MCF 10A (cell line): ENCODE measurements at regions of chr22 and their contacts with region 1.

Region 1: GRCh38 chr22:28772633-28773460 is at the start of gene CCDC117:
- DNase-seq: peak; percentile 93
- H3K4me3 Mint-ChIP-seq: peak within 1 kb of the TSS; percentile 88
- H3K27ac Mint-ChIP-seq: peak within 1 kb of the TSS; percentile 87
- H3K4me1 Mint-ChIP-seq: peaks cover 10% of the 10 kb centered on the region
- H3K27me3 Mint-ChIP-seq: no peaks in the 10 kb centered on the region
- CTCF ChIP-seq: no peak
- total RNA-seq, gene CCDC117: 12.1 and 14.6 TPM in 2 replicates

Region 2: DNA sequence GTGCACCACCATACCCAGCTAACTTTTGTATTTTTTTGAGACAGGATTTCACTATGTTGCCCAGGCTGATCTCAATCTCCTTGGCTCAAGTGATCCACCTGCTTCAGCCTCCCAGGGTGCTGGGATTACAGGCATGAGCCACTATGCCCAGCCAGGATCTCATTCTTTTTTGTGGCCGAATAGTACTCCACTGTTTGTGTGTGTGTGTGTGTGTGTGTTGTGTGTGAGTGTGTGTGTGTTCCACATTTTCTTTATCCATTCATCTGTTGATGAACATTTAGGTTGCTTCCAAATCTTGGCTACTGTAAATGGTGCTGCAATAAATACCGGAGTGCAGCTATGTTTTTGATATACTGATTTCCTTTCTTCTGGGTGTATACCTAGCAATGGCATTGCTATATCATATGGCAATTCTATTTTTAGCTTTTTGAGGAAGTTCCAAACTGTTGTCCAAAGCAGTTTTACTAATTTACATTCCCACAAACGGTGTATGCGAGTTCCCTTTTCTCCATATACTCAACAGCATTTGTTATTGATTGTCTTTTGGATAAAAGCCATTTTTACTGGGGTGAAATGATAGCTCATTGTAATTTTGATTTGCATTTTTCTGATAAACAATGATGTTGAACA is 198.6 kb before region 1 on chr22:
- CTCF ChIA-PET with region 1: no interaction called
- POLR2A ChIA-PET with region 1: no interaction called
- intact Hi-C with region 1: no loop called
- DNase-seq: no peak
- H3K4me3 Mint-ChIP-seq: no peak overlapping the region
- H3K27ac Mint-ChIP-seq: no peak overlapping the region
- H3K4me1 Mint-ChIP-seq: no peaks in the 10 kb centered on the region
- H3K27me3 Mint-ChIP-seq: peaks cover 64% of the 10 kb centered on the region
- CTCF ChIP-seq: no peak

Region 3: GRCh38 chr22:28741758-28742561 is 30.9 kb before region 1 on chr22 and contains the starts of genes CHEK2 and HSCB:
- CTCF ChIA-PET with region 1: interaction called, 5 read pairs
- POLR2A ChIA-PET with region 1: interaction called, 19 read pairs
- intact Hi-C with region 1: no loop called
- DNase-seq: peak; percentile 99
- H3K4me3 Mint-ChIP-seq: peak within 1 kb of the TSS; percentile 93
- H3K27ac Mint-ChIP-seq: peak within 1 kb of the TSS; percentile 92
- H3K4me1 Mint-ChIP-seq: peaks cover 15% of the 10 kb centered on the region
- H3K27me3 Mint-ChIP-seq: no peaks in the 10 kb centered on the region
- CTCF ChIP-seq: no peak
- total RNA-seq, gene CHEK2: 17.6 and 18.8 TPM in 2 replicates
- total RNA-seq, gene HSCB: 19.3 and 24.7 TPM in 2 replicates